HEK293T (cell line): ENCODE measurements at regions of chr15 and their contacts with region 1.

Region 1: GRCh38 chr15:74620636-74621545 is 5.3 kb downstream of the CLK3 start:
- DNase-seq: peak; percentile 83

Region 2: GRCh38 chr15:74682954-74683353 is 62.1 kb after region 1 on chr15:
- CTCF ChIA-PET with region 1: interaction called, 10 read pairs
- POLR2A ChIA-PET with region 1: no interaction called
- DNase-seq: no peak